ENCODE measurements at regions of chr10 and their contacts with region 1.

Region 1: GRCh38 chr10:94344522-94345122 is 18.1 kb downstream of the NOC3L start:
- DNase-seq: peak; percentile 59
- CTCF ChIP-seq: no peak

Region 2: DNA sequence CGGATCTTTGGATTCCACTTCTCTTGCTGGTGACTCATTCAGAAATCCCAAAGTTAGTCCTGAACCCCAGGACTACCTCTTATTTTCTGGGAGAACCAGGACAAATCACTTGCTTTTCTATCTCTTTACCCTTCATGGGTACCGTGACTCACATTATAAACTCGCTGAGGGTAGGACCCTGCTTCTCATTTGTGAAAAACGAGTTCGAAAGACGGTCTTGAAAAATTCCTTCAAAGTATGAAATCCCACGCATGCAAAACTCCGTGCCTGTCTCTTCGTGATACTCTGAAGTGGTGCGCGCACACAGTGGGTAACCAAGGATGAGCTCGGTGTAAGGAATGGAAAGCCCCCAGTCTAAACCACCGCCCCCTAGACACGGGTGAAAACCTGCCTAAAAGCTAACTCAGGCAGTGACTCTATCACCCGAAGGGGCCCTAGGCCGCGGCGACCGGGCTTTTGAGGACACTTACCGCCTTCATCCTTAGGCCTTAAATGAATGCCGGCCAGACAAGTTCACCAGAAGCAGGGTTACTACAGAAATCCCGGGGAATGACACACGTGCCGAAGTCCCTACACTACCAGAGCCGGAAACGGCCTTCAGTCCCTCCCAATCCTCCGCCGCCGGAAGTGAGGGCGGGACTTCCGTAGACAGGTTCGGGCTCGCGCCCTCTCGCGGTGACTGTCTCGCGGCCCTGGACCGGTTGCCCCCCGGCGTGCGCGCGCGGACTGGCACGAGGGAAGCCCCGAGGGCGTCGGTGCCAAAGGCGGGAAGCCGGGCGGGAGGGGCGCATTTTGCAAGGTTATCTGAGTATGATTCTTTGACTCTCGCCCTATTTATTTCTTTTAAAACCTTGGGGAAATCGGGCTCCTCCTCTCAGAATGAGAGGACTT is 18.0 kb after region 1 on chr10 and contains the start of gene NOC3L:
- CTCF ChIA-PET with region 1: interaction called, 11 read pairs
- POLR2A ChIA-PET with region 1: no interaction called
- DNase-seq: peak; percentile 93
- CTCF ChIP-seq: peak; percentile 91

Region 3: DNA sequence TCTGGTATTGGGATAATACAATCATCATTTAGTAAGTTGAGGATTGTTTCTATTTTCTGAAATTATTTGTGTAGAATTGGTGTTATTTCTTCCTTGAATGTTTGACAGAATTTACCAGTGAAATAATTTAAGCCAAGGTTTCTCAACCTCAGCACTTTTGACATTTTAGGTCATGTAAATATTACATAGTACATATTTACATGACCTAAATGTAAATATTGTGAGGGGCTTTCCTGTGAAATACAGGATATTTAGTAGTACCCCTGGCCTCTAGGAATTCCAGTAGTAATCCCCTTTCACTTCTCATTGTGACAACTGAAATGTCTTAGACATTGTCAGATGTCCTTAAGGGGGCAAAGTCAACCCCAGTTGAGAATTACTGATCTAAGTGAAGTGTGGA is 117.5 kb after region 1 on chr10:
- CTCF ChIA-PET with region 1: no interaction called
- POLR2A ChIA-PET with region 1: no interaction called
- DNase-seq: no peak
- CTCF ChIP-seq: no peak